ENCODE measurements at regions of chr12 and their contacts with region 1.

Region 1: DNA sequence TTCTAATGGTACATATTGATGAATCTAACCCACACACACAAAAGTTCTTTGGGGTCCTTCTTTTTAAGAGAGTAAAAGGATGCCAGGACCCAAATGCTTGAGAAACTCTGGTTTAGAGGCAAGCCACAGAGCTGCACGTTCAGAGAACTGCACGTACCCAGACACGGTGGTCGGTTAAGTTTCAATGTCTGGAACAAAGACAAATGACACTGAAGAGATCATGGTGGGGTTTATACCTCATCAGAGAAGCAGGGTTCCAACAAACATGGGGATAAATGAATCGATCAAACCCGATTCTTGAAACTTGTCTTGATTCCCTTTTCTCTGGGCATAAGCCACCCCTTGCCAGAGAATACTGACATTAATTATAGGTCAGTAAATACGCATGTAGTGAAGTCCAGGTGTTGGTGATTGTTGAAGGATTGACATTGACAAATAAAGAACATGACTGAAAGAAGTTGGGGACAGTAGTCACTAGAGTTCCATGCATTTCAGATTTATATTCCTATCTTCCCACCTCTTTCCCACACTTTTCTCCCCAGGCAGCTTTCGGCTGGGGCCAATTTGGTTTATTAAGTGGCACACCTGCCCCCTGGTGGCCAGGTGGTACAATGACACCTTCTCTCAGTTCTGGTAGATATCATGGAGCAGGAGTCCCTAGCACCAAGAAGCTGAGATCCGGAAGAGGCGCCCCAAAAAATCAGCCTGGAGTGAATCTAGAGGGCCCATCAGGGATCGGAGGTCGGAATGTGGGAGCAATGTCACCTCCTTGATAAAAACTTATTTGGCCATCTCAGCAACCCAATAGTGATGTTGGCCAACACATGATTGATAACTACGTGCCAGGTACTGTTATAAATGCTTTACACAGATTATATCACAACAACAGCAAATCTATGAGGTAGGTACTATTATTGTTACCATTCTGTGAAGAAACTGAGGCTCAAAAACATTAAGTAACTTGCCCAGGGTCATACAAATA is 17.8 kb upstream of the HDAC7 start:
- DNase-seq: peak; percentile 74
- H3K4me3 ChIP-seq: no peak overlapping the region
- H3K27ac ChIP-seq: no peak overlapping the region
- H3K4me1 ChIP-seq: no peaks in the 10 kb centered on the region
- H3K27me3 ChIP-seq: no peaks in the 10 kb centered on the region
- CTCF ChIP-seq: peak; percentile 95

Region 2: GRCh38 chr12:47651368-47652254 is 185.9 kb before region 1 on chr12:
- CTCF ChIA-PET with region 1: interaction called, 6 read pairs
- POLR2A ChIA-PET with region 1: no interaction called
- intact Hi-C with region 1: loop called (anchors 5 kb)
- DNase-seq: peak; percentile 87
- H3K4me3 ChIP-seq: no peak overlapping the region
- H3K27ac ChIP-seq: peak overlapping the region; percentile 40
- H3K4me1 ChIP-seq: peaks cover 12% of the 10 kb centered on the region
- H3K27me3 ChIP-seq: no peaks in the 10 kb centered on the region
- CTCF ChIP-seq: peak; percentile 75

Region 3: DNA sequence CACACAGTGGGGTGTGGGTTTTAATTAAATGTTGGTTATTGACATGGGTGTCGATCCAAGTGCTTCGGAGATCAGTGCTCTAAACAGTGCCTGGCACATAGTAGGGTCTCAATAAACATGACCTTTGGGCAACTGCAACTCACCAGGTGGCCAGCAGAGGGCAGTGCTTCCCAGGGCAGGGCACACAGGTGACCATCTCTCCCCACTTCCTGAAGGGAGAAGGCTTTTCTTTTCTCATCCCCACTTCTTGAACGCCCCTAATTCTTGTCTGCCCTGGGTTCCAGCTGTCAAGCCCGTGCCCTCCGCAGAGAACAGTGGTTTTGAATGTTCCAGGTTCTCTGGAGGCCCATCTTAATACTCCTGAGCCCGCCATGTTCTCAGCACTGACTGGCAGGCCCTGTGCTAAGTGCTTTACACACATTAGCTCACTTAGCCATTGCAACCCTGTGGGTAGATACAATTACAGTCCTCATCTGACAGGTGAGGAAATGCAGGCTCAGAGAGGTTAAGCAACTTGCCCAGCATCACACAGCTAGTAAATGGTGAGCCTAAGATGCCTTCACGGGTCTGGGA is 95.1 kb before region 1 on chr12:
- CTCF ChIA-PET with region 1: interaction called, 15 read pairs
- POLR2A ChIA-PET with region 1: no interaction called
- intact Hi-C with region 1: no loop called
- DNase-seq: no peak
- H3K4me3 ChIP-seq: no peak overlapping the region
- H3K27ac ChIP-seq: no peak overlapping the region
- H3K4me1 ChIP-seq: peaks cover 39% of the 10 kb centered on the region
- H3K27me3 ChIP-seq: no peaks in the 10 kb centered on the region
- CTCF ChIP-seq: peak; percentile 98

Region 4: DNA sequence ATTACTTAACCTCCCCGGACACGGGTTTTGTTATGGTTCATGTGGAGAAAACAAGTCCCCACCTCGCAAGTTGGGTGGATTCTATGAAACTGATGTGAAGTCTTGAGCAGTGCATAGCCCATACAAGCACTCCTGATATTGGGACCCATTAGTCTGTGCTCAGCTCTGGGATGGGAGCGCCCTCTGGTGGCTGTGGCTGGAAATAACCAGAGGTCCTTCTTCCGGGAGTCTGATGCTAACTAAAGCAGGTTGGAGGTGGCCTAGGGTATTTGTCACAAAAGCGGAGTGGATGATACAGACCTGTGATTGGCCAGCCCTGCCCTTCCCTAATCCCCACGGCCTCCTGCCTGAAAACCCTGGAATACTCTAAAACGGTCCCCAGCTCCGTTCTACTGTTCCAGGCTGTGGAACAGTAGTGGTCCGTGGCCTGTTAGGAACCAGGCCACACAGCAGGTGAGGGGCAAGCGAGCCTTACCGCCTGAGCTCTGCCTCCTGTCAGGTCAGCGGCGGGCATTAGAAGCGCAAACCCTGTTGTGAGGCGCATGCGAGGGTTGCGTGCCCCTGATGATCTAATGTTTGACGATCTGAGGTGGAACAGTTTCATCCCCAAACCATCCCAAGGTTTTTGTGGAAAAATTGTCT is 58.1 kb before region 1 on chr12:
- CTCF ChIA-PET with region 1: interaction called, 6 read pairs
- POLR2A ChIA-PET with region 1: no interaction called
- intact Hi-C with region 1: loop called (anchors 2 kb)
- DNase-seq: peak; percentile 91
- H3K4me3 ChIP-seq: no peak overlapping the region
- H3K27ac ChIP-seq: no peak overlapping the region
- H3K4me1 ChIP-seq: peaks cover 35% of the 10 kb centered on the region
- H3K27me3 ChIP-seq: no peaks in the 10 kb centered on the region
- CTCF ChIP-seq: peak; percentile 96

Region 5: GRCh38 chr12:47812797-47813510 is 24.5 kb before region 1 on chr12:
- CTCF ChIA-PET with region 1: interaction called, 11 read pairs
- POLR2A ChIA-PET with region 1: no interaction called
- intact Hi-C with region 1: no loop called
- DNase-seq: peak; percentile 89
- H3K4me3 ChIP-seq: peak overlapping the region; percentile 43
- H3K27ac ChIP-seq: peak overlapping the region; percentile 78
- H3K4me1 ChIP-seq: peaks cover 68% of the 10 kb centered on the region
- H3K27me3 ChIP-seq: no peaks in the 10 kb centered on the region
- CTCF ChIP-seq: no peak

Region 6: DNA sequence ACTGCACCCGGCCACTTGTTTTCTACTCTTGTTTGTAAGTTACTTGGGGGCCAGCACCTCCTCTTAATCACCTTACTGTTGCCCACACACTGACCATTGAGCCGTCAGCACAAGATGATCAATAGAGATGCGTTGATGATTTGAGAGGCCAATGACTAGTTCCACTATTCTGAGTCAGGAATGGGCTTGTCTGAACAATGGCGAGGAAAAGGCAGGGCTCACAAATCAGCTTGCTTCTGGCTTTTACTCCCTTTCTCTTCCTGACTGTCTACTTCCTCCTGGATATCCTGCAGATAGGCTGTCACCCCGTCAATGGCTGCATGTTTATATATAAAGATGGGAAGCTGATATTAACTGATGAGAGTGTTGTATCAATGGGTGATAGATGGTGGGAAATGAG is 11.4 kb after region 1 on chr12:
- CTCF ChIA-PET with region 1: interaction called, 3 read pairs
- POLR2A ChIA-PET with region 1: interaction called, 16 read pairs
- intact Hi-C with region 1: no loop called
- DNase-seq: no peak
- H3K4me3 ChIP-seq: no peak overlapping the region
- H3K27ac ChIP-seq: no peak overlapping the region
- H3K4me1 ChIP-seq: no peaks in the 10 kb centered on the region
- H3K27me3 ChIP-seq: no peaks in the 10 kb centered on the region
- CTCF ChIP-seq: no peak